HEK293 (cell line): ENCODE measurements at regions of chr7 and their contacts with region 1.

Region 1: GRCh38 chr7:155009570-155010157 is 6.7 kb upstream of the PAXIP1 start:
- H3K4me3 ChIP-seq: no peak overlapping the region
- H3K27ac ChIP-seq: no peak overlapping the region
- H3K4me1 ChIP-seq: no peaks in the 10 kb centered on the region
- CTCF ChIP-seq: no peak

Region 2: GRCh38 chr7:155020996-155021395 is 11.3 kb after region 1 on chr7:
- CTCF ChIA-PET with region 1: interaction called, 18 read pairs
- POLR2A ChIA-PET with region 1: no interaction called
- H3K4me3 ChIP-seq: no peak overlapping the region
- H3K27ac ChIP-seq: no peak overlapping the region
- H3K4me1 ChIP-seq: no peaks in the 10 kb centered on the region
- CTCF ChIP-seq: no peak

Region 3: GRCh38 chr7:155277690-155277994 is 268.0 kb after region 1 on chr7:
- CTCF ChIA-PET with region 1: no interaction called
- POLR2A ChIA-PET with region 1: no interaction called
- H3K4me3 ChIP-seq: no peak overlapping the region
- H3K27ac ChIP-seq: no peak overlapping the region
- H3K4me1 ChIP-seq: no peaks in the 10 kb centered on the region
- CTCF ChIP-seq: no peak